IMR-90 (cell line): ENCODE measurements at regions of chr15 and their contacts with region 1.

Region 1: GRCh38 chr15:81111510-81112470 is 22.3 kb upstream of the CFAP161 start:
- DNase-seq: no peak
- ATAC-seq: no peak
- H3K4me3 ChIP-seq: no peak overlapping the region
- H3K27ac ChIP-seq: no peak overlapping the region
- H3K4me1 ChIP-seq: peaks cover 13% of the 10 kb centered on the region
- H3K27me3 ChIP-seq: no peaks in the 10 kb centered on the region
- CTCF ChIP-seq: no peak
- POLR2A ChIP-seq: no peak
- RAD21 ChIP-seq: no peak

Region 2: GRCh38 chr15:81189583-81190283 is 77.9 kb after region 1 on chr15:
- CTCF ChIA-PET with region 1: no interaction called
- POLR2A ChIA-PET with region 1: no interaction called
- dilution Hi-C with region 1: no loop called
- in situ Hi-C with region 1: no loop called
- intact Hi-C with region 1: loop called (anchors 2 kb)
- DNase-seq: peak; percentile 99
- ATAC-seq: peak; percentile 87
- H3K4me3 ChIP-seq: no peak overlapping the region
- H3K27ac ChIP-seq: peak overlapping the region; percentile 96
- H3K4me1 ChIP-seq: peaks cover 25% of the 10 kb centered on the region
- H3K27me3 ChIP-seq: no peaks in the 10 kb centered on the region
- CTCF ChIP-seq: no peak
- POLR2A ChIP-seq: no peak; the same call in 1 of the 2 replicates
- RAD21 ChIP-seq: 0 out of 2 replicates have a peak, but pooled peaks have one; percentile 4

Region 3: DNA sequence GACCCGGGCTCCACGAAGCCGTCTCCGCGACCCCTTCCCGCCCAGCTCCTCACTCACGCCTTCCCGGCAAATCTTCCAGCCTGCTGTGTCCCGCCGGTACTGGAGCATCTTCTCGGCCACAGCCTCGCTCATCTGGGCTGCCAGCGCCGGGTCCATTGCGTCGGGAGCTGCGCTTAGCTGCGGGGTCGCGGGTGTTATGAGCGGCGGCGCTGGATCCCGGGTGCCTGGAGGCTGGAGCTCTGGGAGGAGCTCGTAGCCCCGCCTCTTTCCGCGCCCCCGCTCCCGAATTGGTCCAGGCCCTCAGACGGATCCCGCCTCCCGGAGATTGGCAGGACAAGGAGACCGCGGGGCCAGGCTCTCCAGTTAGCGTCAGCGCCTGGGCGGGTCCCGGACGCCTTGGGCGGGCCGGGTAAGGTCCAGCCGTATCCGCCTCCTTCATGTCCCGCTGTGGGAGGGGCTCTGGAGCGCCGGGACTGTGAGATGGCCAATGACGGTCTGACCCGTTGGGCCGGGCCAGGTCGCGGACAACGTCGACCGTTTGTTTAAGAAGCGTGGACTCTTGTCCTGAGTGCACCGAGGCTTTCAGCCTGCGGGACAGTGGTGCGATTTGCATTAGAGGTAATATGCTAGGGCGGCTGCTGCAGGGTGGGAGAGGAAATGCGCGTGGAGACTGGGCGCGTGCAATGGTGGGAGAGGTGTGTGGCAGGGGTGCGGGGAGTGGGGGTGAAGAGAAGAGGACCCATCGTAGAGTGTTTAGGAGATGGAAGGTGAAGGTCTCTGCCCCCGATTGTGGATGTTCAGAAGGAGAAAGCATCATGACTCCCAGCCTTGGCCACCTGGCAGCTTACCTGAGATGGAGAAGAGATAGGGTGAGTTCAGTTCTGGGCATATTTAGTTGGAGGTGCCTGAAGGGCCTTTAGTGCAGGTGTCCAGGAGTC is 212.4 kb after region 1 on chr15 and contains the start of gene STARD5:
- CTCF ChIA-PET with region 1: no interaction called
- POLR2A ChIA-PET with region 1: no interaction called
- dilution Hi-C with region 1: no loop called
- in situ Hi-C with region 1: no loop called
- intact Hi-C with region 1: no loop called
- DNase-seq: peak; percentile 96
- ATAC-seq: peak; percentile 99
- H3K4me3 ChIP-seq: peak within 1 kb of the TSS; percentile 81
- H3K27ac ChIP-seq: peak within 1 kb of the TSS; percentile 60
- H3K4me1 ChIP-seq: peaks cover 26% of the 10 kb centered on the region
- H3K27me3 ChIP-seq: no peaks in the 10 kb centered on the region
- CTCF ChIP-seq: no peak
- POLR2A ChIP-seq: peak; percentile 96
- RAD21 ChIP-seq: no peak
- total RNA-seq, gene STARD5: 4.4 and 5.0 TPM in 2 replicates